Colonic mucosa (tissue), 4 donors: ENCODE measurements at regions of chr5 and their contacts with region 1.

Region 1: DNA sequence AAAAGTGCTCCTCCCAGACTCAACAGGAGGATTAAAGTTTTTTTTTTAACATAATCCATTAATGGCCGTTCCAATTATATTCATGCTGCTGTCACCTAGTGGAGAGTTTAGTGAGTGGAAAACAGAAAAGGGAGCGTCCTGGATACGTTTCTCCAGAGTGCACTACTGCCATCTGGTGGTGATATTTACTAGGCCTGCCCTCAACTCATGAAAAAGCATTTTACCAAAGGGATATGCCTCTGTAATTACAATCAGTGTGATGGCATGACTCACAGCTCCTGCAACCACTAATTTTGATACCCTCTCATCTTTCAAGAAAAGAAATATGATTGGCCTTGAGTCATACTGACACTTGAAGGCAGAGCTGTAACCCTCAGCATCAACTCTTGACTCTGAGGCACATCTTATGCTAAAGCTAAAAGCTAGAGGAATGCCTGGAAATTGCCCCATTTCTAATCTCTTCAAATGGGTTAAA is 20.0 kb downstream of the MINAR2 start:
- DNase-seq: peak; percentile 83
- H3K4me3 ChIP-seq: no peak overlapping the region
- H3K27ac ChIP-seq: no peak overlapping the region
- H3K4me1 ChIP-seq: no peaks in the 10 kb centered on the region
- H3K27me3 ChIP-seq: no peaks in the 10 kb centered on the region
- CTCF ChIP-seq: peak; percentile 98

Region 2: GRCh38 chr5:128905571-128906110 is 862.3 kb before region 1 on chr5:
- intact Hi-C with region 1: loop called (anchors 5 kb)
- DNase-seq: peak; percentile 30
- H3K4me3 ChIP-seq: no peak overlapping the region
- H3K27ac ChIP-seq: no peak overlapping the region
- H3K4me1 ChIP-seq: no peaks in the 10 kb centered on the region
- H3K27me3 ChIP-seq: no peaks in the 10 kb centered on the region
- CTCF ChIP-seq: peak; percentile 56

Region 3: GRCh38 chr5:129172580-129172979 is 595.4 kb before region 1 on chr5:
- intact Hi-C with region 1: loop called (anchors 10 kb)
- DNase-seq: no peak
- H3K4me3 ChIP-seq: no peak overlapping the region
- H3K27ac ChIP-seq: no peak overlapping the region
- H3K4me1 ChIP-seq: no peaks in the 10 kb centered on the region
- H3K27me3 ChIP-seq: no peaks in the 10 kb centered on the region
- CTCF ChIP-seq: no peak

Region 4: DNA sequence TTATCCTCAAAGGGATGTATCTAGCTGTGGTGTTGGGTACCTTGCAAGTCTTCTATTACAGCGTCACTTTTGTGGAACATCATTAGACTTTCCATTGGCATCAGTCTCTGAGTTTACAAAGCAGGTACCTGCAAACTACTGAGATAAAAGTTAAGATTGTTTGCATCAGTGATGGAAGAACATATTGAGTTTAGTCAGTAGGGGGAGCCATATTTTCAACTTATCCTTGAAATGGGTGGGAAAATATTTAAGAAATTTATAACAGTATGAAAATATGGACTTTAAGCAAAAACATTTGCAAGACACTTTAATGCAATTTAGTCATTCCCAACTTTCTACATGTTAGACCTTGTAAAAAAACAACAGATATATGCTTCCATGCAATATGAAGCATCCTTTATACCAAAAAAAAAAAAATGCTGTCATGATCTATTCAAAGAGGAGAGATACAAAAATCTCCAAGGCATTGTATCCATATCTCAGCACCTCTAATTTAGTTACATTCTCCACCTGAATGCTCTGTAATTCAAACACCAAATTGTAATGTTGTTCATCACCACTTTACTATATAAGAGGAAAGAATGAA is 406.4 kb before region 1 on chr5:
- intact Hi-C with region 1: loop called (anchors 10 kb)
- DNase-seq: no peak
- H3K4me3 ChIP-seq: no peak overlapping the region
- H3K27ac ChIP-seq: no peak overlapping the region
- H3K4me1 ChIP-seq: no peaks in the 10 kb centered on the region
- H3K27me3 ChIP-seq: no peaks in the 10 kb centered on the region
- CTCF ChIP-seq: peak; percentile 20